ENCODE measurements at regions of chr14 and their contacts with region 1.

Region 1: DNA sequence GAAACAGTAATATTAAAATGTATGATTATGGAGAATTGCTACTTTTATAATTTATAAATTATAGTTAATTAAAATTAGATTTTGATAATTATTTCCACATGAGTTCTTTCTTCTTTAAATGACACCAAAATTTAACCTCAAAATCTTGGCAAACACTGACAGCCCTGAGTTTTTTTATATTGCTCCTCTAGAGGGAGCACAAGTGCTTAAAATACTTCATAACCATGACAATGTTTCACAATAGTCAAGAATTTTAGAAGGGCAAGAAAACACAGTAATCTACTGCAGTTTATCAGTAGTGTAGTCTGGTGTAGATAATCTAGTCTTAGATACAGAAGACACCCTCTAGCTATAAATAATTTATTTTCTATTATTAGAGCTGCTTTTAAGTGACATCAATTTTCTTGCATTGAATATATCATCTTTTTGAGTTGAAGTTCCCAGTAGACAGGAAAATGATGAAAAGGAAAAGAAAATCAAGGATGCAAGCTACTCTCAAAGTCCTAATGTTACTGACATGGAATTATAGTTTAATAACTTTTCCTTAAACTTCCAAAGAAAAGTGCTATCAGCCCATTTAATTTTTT is 14.3 kb upstream of the PTGER2 start:
- DNase-seq: peak; percentile 59
- ATAC-seq: 0 out of 3 replicates have a peak, but pooled peaks have one; percentile 30
- H3K4me3 ChIP-seq: no peak overlapping the region
- H3K27ac ChIP-seq: no peak overlapping the region
- H3K4me1 ChIP-seq: no peaks in the 10 kb centered on the region
- H3K27me3 ChIP-seq: peaks cover 0 to 4% of the 10 kb centered on the region in 2 experiments; a peak in 1 of 5 replicates
- CTCF ChIP-seq: peak; percentile 66
- EP300 ChIP-seq: no peak
- POLR2A ChIP-seq: no peak
- RAD21 ChIP-seq: peak; percentile 19; the same call in 1 of the 2 replicates

Region 2: GRCh38 chr14:52267501-52268278 is 32.1 kb before region 1 on chr14 and contains the start of gene PTGDR:
- CTCF ChIA-PET with region 1: no interaction called
- POLR2A ChIA-PET with region 1: no interaction called
- in situ Hi-C with region 1: no loop called
- intact Hi-C with region 1: no loop called
- DNase-seq: no peak
- ATAC-seq: no peak; the same call in 1 of the 3 replicates
- H3K4me3 ChIP-seq: no peak within 1 kb of the TSS
- H3K27ac ChIP-seq: no peak within 1 kb of the TSS
- H3K4me1 ChIP-seq: no peaks in the 10 kb centered on the region
- H3K27me3 ChIP-seq: peaks cover 0 to 18% of the 10 kb centered on the region in 2 experiments; a peak in 1 of 5 replicates
- CTCF ChIP-seq: no peak
- EP300 ChIP-seq: no peak
- POLR2A ChIP-seq: no peak
- RAD21 ChIP-seq: no peak
- total RNA-seq, gene PTGDR: not detected in 2 replicates

Region 3: GRCh38 chr14:52473557-52473956 is 173.8 kb after region 1 on chr14:
- CTCF ChIA-PET with region 1: interaction called, 16 read pairs
- POLR2A ChIA-PET with region 1: no interaction called
- in situ Hi-C with region 1: loop called (anchors 5 kb)
- intact Hi-C with region 1: loop called (anchors 1 kb)
- DNase-seq: peak; percentile 44
- ATAC-seq: no peak
- H3K4me3 ChIP-seq: no peak overlapping the region
- H3K27ac ChIP-seq: no peak overlapping the region
- H3K4me1 ChIP-seq: no peaks in the 10 kb centered on the region
- H3K27me3 ChIP-seq: no peaks in the 10 kb centered on the region
- CTCF ChIP-seq: peak; percentile 55
- EP300 ChIP-seq: no peak
- POLR2A ChIP-seq: no peak
- RAD21 ChIP-seq: peak; percentile 14; the same call in 1 of the 2 replicates

Measured in HepG2 (cell line).